ENCODE measurements at regions of chr1 and their contacts with region 1.

Region 1: DNA sequence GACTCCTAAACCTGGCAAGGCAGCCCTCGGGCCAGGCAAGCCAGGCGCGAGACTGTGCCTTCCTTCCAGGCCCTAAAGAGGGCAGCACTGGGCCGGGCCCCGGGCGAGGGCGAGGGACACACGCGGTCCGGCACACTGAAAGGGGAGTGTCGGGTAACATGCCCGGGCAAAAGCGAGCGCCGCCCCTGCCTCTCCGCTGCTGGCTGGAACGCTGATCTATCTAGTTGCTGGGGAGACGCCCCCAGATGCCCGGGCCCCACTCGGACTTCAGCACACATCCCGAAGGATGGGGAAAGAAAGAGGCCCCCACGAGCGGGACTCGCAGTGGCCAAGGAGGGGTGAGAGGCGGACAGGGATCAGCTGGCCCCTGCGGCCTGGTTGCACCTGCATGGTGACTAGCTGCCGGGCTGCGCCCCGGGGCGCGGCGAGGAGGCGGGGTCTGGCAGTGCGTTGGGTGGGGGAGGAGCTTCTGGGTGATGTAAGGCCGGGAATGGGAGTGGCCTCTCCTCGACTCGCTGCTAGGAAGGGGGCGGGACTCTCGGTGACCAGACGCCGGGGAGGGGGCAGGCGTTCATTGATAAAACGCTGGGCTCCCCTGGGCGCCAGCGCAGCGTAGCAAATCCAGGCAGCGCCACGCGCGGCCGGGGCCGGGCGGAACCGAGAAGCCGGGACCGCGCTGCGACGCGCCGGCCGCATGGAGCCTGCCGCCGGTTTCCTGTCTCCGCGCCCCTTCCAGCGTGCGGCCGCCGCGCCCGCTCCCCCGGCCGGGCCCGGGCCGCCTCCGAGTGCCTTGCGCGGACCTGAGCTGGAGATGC is at the start of gene PLK3:
- DNase-seq: peak; percentile 97 to 99 (median 98)
- ATAC-seq: peak; percentile 81 to 88 (median 86)
- H3K4me3 ChIP-seq: peak within 1 kb of the TSS; percentile 81 to 97
- H3K4me3 Mint-ChIP-seq: peak within 1 kb of the TSS; percentile 83 to 98 (median 92)
- H3K27ac ChIP-seq: peak within 1 kb of the TSS; percentile 87
- H3K27ac Mint-ChIP-seq: peak within 1 kb of the TSS; percentile 99 to 100
- H3K4me1 ChIP-seq: peaks cover 15 to 44% of the 10 kb centered on the region in 2 experiments
- H3K4me1 Mint-ChIP-seq: peaks cover 36 to 54% (median 42%) of the 10 kb centered on the region in 3 donors
- H3K27me3 ChIP-seq: no peaks in the 10 kb centered on the region
- H3K27me3 Mint-ChIP-seq: no peaks in the 10 kb centered on the region
- total RNA-seq, gene PLK3: 124 to 453 (median 136) TPM

Region 2: GRCh38 chr1:44721485-44722361 is 78.3 kb before region 1 on chr1:
- CTCF ChIA-PET with region 1: interaction called, 3 to 5 read pairs
- POLR2A ChIA-PET with region 1: interaction called in 1 of 2 experiments, 19 read pairs
- DNase-seq: peak in 33 of 35 experiments; percentile 29 to 86 (median 65)
- ATAC-seq: peak; percentile 78 to 89 (median 78)
- H3K4me3 ChIP-seq: peak overlapping the region in 1 of 2 donors; percentile 1
- H3K4me3 Mint-ChIP-seq: peak overlapping the region; percentile 57 to 76 (median 69)
- H3K27ac ChIP-seq: peak overlapping the region; percentile 85
- H3K27ac Mint-ChIP-seq: peak overlapping the region; percentile 96 to 99
- H3K4me1 ChIP-seq: peaks cover 32 to 77% of the 10 kb centered on the region in 2 experiments
- H3K4me1 Mint-ChIP-seq: peaks cover 68 to 74% (median 71%) of the 10 kb centered on the region in 3 donors
- H3K27me3 ChIP-seq: peaks cover 0 to 3% of the 10 kb centered on the region in 2 experiments
- H3K27me3 Mint-ChIP-seq: no peaks in the 10 kb centered on the region

Region 3: GRCh38 chr1:44730741-44731512 is 69.0 kb before region 1 on chr1 and contains the start of gene RNU5D-1:
- CTCF ChIA-PET with region 1: interaction called, 3 to 10 read pairs
- POLR2A ChIA-PET with region 1: interaction called, 5 to 7 read pairs
- DNase-seq: peak; percentile 82 to 96 (median 90)
- ATAC-seq: peak; percentile 83 to 85 (median 84)
- H3K4me3 ChIP-seq: peak within 1 kb of the TSS in 1 of 2 donors; percentile 45
- H3K4me3 Mint-ChIP-seq: peak within 1 kb of the TSS; percentile 62 to 80 (median 69)
- H3K27ac ChIP-seq: peak within 1 kb of the TSS; percentile 99
- H3K27ac Mint-ChIP-seq: peak within 1 kb of the TSS; percentile 100
- H3K4me1 ChIP-seq: peaks cover 6 to 25% of the 10 kb centered on the region in 2 experiments
- H3K4me1 Mint-ChIP-seq: peaks cover 26 to 38% (median 29%) of the 10 kb centered on the region in 3 donors
- H3K27me3 ChIP-seq: no peaks in the 10 kb centered on the region
- H3K27me3 Mint-ChIP-seq: no peaks in the 10 kb centered on the region
- total RNA-seq, gene RNU5D-1: 21.4 TPM in 1 of 5 donors, not detected in the others

Region 4: DNA sequence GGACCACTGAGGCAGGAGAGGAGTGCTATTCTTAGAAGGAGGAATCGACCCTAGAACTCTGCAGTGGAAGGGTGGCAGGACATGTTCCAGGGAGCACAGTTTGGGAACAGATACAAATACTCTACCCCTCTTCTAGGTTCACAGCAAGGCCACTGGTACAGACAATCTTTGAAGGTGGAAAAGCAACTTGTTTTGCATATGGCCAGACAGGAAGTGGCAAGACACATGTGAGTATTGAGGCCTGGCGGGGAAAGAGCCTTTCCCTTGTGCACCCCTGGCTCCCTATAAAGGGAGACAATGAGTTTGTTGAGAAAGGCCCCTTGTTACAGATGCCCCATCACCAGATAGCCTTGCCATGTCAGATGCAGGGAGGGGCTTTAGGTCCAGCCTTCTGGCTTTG is 42.6 kb before region 1 on chr1:
- CTCF ChIA-PET with region 1: no interaction called
- POLR2A ChIA-PET with region 1: no interaction called
- DNase-seq: no peak
- ATAC-seq: no peak
- H3K4me3 ChIP-seq: no peak overlapping the region
- H3K4me3 Mint-ChIP-seq: no peak overlapping the region
- H3K27ac ChIP-seq: no peak overlapping the region
- H3K27ac Mint-ChIP-seq: no peak overlapping the region
- H3K4me1 ChIP-seq: peaks cover 0 to 7% of the 10 kb centered on the region in 2 experiments
- H3K4me1 Mint-ChIP-seq: peaks cover 3 to 11% (median 5%) of the 10 kb centered on the region in 3 donors
- H3K27me3 ChIP-seq: no peaks in the 10 kb centered on the region
- H3K27me3 Mint-ChIP-seq: no peaks in the 10 kb centered on the region

Region 5: DNA sequence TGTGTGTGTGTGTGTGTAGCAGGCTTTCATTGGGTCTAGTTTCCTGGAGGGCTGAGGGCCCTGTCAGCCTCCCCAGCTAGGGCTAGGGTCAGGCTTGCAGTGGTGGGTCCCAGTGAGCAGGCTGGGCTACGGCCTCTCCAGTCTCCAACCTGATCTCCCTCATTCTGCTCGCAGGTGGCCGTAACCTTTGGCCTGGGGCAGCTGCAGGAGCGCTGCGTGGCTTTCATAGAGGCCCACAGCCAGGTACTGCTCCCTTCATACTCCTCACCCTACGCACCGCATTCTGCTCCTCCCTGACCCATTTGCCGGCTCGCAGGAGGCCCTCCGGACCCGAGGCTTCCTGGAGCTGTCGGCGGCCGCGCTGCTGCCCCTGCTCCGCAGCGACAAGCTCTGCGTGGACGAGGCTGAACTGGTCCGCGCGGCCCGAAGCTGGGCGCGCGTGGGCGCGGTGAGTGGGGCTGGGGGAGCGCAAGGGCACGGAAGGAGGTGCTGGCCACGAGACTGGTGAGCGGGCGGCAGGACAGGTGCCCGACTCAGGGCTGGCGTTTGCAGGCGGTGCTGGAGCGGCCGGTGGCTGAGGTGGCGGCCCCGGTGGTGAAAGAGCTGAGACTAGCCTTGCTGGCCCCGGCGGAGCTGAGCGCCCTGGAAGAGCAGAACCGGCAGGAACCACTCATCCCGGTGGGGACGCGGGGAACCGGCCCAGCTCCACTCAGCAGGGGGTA is 13.0 kb after region 1 on chr1:
- CTCF ChIA-PET with region 1: interaction called, 5 to 17 read pairs
- POLR2A ChIA-PET with region 1: interaction called, 22 to 48 read pairs
- DNase-seq: peak in 1 of 35 experiments; percentile 22
- ATAC-seq: no peak
- H3K4me3 ChIP-seq: peak overlapping the region; percentile 51 to 66
- H3K4me3 Mint-ChIP-seq: peak overlapping the region in 2 of 3 donors; percentile 17 to 85
- H3K27ac ChIP-seq: peak overlapping the region; percentile 82
- H3K27ac Mint-ChIP-seq: peak overlapping the region; percentile 52 to 99
- H3K4me1 ChIP-seq: peaks cover 44 to 70% of the 10 kb centered on the region in 2 experiments
- H3K4me1 Mint-ChIP-seq: peaks cover 61 to 72% (median 66%) of the 10 kb centered on the region in 3 donors
- H3K27me3 ChIP-seq: no peaks in the 10 kb centered on the region
- H3K27me3 Mint-ChIP-seq: no peaks in the 10 kb centered on the region

Region 6: GRCh38 chr1:44819608-44820327 is 19.8 kb after region 1 on chr1:
- CTCF ChIA-PET with region 1: interaction called, 3 to 25 read pairs
- POLR2A ChIA-PET with region 1: interaction called, 5 to 40 read pairs
- DNase-seq: peak; percentile 55 to 90 (median 75)
- ATAC-seq: peak; percentile 79 to 87 (median 82)
- H3K4me3 ChIP-seq: peak overlapping the region; percentile 77 to 91
- H3K4me3 Mint-ChIP-seq: peak overlapping the region; percentile 84 to 96 (median 95)
- H3K27ac ChIP-seq: peak overlapping the region; percentile 100
- H3K27ac Mint-ChIP-seq: peak overlapping the region; percentile 100
- H3K4me1 ChIP-seq: peaks cover 10 to 30% of the 10 kb centered on the region in 2 experiments
- H3K4me1 Mint-ChIP-seq: peaks cover 39 to 47% (median 41%) of the 10 kb centered on the region in 3 donors
- H3K27me3 ChIP-seq: no peaks in the 10 kb centered on the region
- H3K27me3 Mint-ChIP-seq: no peaks in the 10 kb centered on the region